ENCODE measurements at regions of chr14 and their contacts with region 1.

Region 1: GRCh38 chr14:90758028-90758889 is 58.0 kb downstream of the TTC7B start:
- DNase-seq: peak; percentile 100
- H3K4me3 ChIP-seq: peak overlapping the region; percentile 52 to 71
- H3K27ac ChIP-seq: peak overlapping the region; percentile 41 to 64; a peak in 3 of 4 replicates
- H3K4me1 ChIP-seq: peaks cover 9 to 21% of the 10 kb centered on the region in 2 experiments; a peak in 3 of 4 replicates
- H3K27me3 ChIP-seq: no peaks in the 10 kb centered on the region
- CTCF ChIP-seq: peak; percentile 74
- EP300 ChIP-seq: no peak
- RAD21 ChIP-seq: peak; percentile 86

Region 2: DNA sequence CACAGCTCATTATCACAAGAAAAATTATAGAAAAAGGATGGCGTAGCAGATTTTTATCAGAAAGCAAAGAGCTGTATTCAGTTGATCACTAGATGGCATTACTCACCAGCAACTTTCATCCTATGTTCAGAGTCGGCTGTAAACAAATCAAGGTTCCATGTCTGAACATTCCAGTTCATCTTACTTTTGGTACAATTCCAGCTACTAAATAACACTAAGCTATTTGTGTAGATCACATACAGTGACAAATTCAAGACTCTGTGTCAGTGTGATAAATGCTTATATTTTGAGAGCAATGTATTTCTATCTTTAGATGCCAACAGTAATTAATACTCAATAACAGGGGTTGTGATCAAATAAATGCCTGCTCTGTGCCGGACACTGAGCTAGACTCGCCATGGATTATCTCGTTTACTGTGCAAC is 456.6 kb before region 1 on chr14:
- CTCF ChIA-PET with region 1: interaction called, 50 read pairs
- POLR2A ChIA-PET with region 1: no interaction called
- DNase-seq: peak; percentile 51
- H3K4me3 ChIP-seq: no peak overlapping the region
- H3K27ac ChIP-seq: peak overlapping the region in 1 of 2 experiments; percentile 47; a peak in 1 of 4 replicates
- H3K4me1 ChIP-seq: no peaks in the 10 kb centered on the region; a peak in 1 of 4 replicates
- H3K27me3 ChIP-seq: no peaks in the 10 kb centered on the region
- CTCF ChIP-seq: peak; percentile 67
- EP300 ChIP-seq: no peak
- RAD21 ChIP-seq: peak; percentile 88

Region 3: DNA sequence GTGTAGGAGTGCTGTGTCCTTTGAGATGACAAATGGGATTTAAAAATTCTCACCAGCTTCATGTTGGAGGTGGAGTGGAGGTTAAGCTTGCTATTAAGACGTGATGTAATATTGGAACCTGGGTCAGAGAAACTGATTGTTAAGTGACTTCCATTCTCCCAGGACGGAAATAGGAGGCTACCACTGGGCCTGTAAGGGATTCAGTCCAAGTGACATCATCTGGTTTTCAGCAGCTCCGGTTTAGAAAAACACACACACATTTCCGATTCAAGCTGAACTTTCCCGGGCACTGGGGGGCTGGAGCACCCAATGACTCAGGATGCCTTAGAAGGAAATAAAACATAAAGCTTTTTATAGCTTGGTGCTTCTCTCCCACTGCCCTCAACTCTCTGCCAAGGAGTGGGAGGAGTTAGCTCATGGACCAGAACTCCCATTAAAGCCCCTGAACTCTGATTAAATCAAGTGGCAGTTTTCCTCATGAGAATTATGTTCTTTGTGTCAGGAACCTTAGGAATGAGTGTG is 349.0 kb before region 1 on chr14:
- CTCF ChIA-PET with region 1: interaction called, 15 read pairs
- POLR2A ChIA-PET with region 1: no interaction called
- DNase-seq: no peak
- H3K4me3 ChIP-seq: no peak overlapping the region
- H3K27ac ChIP-seq: peak overlapping the region; percentile 76 to 89
- H3K4me1 ChIP-seq: peaks cover 14 to 17% of the 10 kb centered on the region in 2 experiments; a peak in 3 of 4 replicates
- H3K27me3 ChIP-seq: no peaks in the 10 kb centered on the region
- CTCF ChIP-seq: no peak
- EP300 ChIP-seq: peak in 1 of 2 experiments; percentile 35; a peak in 1 of 4 replicates
- RAD21 ChIP-seq: 0 out of 2 replicates have a peak, but pooled peaks have one; percentile 3

Region 4: GRCh38 chr14:90697577-90698206 is 60.6 kb before region 1 on chr14:
- CTCF ChIA-PET with region 1: interaction called, 51 read pairs
- POLR2A ChIA-PET with region 1: interaction called, 3 read pairs
- DNase-seq: peak; percentile 80
- H3K4me3 ChIP-seq: peak overlapping the region in 1 of 2 experiments; percentile 48; a peak in 1 of 4 replicates
- H3K27ac ChIP-seq: peak overlapping the region in 1 of 2 experiments; percentile 65; a peak in 3 of 4 replicates
- H3K4me1 ChIP-seq: peaks cover 21 to 28% of the 10 kb centered on the region in 2 experiments; a peak in 3 of 4 replicates
- H3K27me3 ChIP-seq: no peaks in the 10 kb centered on the region
- CTCF ChIP-seq: peak; percentile 96
- EP300 ChIP-seq: no peak
- RAD21 ChIP-seq: peak; percentile 97

Region 5: GRCh38 chr14:90721619-90722305 is 36.5 kb before region 1 on chr14:
- CTCF ChIA-PET with region 1: interaction called, 19 read pairs
- POLR2A ChIA-PET with region 1: no interaction called
- DNase-seq: no peak
- H3K4me3 ChIP-seq: no peak overlapping the region
- H3K27ac ChIP-seq: peak overlapping the region in 1 of 2 experiments; percentile 34; a peak in 1 of 4 replicates
- H3K4me1 ChIP-seq: peaks cover 3 to 7% of the 10 kb centered on the region in 2 experiments; a peak in 2 of 4 replicates
- H3K27me3 ChIP-seq: no peaks in the 10 kb centered on the region
- CTCF ChIP-seq: no peak
- EP300 ChIP-seq: no peak
- RAD21 ChIP-seq: no peak

Region 6: GRCh38 chr14:90785471-90785870 is 27.2 kb after region 1 on chr14:
- CTCF ChIA-PET with region 1: interaction called, 13 read pairs
- POLR2A ChIA-PET with region 1: no interaction called
- DNase-seq: no peak
- H3K4me3 ChIP-seq: no peak overlapping the region
- H3K27ac ChIP-seq: no peak overlapping the region
- H3K4me1 ChIP-seq: peaks cover 0 to 2% of the 10 kb centered on the region in 2 experiments; a peak in 1 of 4 replicates
- H3K27me3 ChIP-seq: no peaks in the 10 kb centered on the region
- CTCF ChIP-seq: peak; percentile 42
- EP300 ChIP-seq: no peak
- RAD21 ChIP-seq: no peak

Region 7: DNA sequence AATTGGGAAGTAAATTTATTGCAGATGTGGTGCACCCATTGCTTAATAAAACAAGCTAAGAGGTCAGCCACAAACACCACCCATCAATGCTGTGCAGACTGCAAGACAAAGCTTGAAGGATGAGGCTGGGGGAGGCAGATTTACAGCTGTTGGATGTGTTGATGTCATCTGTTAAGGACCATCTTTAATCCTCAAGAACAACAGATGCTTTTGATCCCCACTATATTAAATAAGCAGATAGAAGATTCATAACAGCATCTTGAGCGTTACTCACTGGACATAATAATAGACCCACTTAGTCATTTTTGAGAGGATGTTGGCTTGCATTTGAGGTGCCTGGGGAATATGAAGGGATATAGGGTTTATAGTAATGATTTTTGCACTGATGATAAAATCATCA is 427.5 kb after region 1 on chr14:
- CTCF ChIA-PET with region 1: no interaction called
- POLR2A ChIA-PET with region 1: no interaction called
- DNase-seq: peak; percentile 30
- H3K4me3 ChIP-seq: no peak overlapping the region
- H3K27ac ChIP-seq: peak overlapping the region in 1 of 2 experiments; percentile 35; a peak in 2 of 4 replicates
- H3K4me1 ChIP-seq: peaks cover 0 to 4% of the 10 kb centered on the region in 2 experiments; a peak in 1 of 4 replicates
- H3K27me3 ChIP-seq: no peaks in the 10 kb centered on the region
- CTCF ChIP-seq: no peak
- EP300 ChIP-seq: peak in 1 of 2 experiments; percentile 7; a peak in 1 of 4 replicates
- RAD21 ChIP-seq: no peak; the same call in 1 of the 2 replicates